ENCODE measurements at regions of chr2 and their contacts with region 1.

Region 1: DNA sequence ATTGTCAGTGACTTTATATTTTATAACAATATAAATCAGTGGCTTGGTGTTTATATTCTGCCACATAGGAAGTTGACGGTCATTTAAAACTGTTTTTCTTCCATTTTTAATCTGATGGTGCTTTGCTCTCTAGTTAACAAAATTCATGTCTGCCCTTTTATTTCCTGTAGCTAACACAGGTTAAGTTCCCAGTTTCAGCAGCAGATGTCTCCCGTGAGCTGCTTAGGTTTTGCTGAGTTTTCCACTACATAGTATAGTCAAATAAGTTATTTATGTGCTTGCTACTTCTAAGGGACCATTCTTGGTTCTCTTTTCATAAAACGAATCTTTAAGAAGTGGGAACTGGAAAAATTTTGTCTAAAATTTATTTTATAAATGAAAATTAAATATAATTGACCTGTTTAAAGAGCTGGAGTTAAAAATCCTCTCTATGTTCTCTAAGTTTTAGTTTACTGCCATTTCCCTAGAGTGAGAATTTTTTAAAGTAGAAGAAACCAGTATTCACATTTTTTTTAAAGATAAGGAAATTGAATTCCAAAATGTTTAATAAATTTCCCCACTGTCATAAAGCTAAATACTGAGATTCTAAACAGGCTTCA is 20.6 kb downstream of the HTR2B start:
- DNase-seq: peak; percentile 21 to 69
- ATAC-seq: peak in 7 of 8 donors; percentile 69 to 87 (median 77)
- H3K4me3 ChIP-seq: no peak overlapping the region
- H3K27ac ChIP-seq: peak overlapping the region in 1 of 10 donors; percentile 34
- H3K4me1 ChIP-seq: peaks cover 0 to 32% (median 3%) of the 10 kb centered on the region in 9 donors
- H3K27me3 ChIP-seq: no peaks in the 10 kb centered on the region
- CTCF ChIP-seq: peak; percentile 55 to 94 (median 83)

Region 2: DNA sequence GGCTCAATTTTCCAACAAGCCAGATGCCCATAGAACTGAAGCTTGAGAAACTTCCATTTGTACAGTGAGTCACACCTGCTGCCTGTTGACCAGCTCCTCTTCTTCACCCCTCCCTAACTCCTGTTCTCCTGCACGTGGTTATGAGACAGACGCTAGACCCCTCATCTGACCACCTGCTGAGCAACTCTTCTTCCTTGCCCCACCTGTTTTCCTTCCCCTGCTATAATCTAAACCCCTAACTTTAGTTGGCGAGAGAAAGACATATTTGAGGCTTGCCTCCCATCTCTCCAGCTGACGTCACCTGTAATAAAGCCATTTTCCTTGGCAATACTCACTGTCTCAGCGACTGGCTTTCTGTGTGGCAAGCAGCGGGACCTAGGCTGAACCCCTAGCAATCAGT is 261.7 kb before region 1 on chr2:
- intact Hi-C with region 1: no loop called
- DNase-seq: no peak
- ATAC-seq: no peak
- H3K4me3 ChIP-seq: no peak overlapping the region
- H3K27ac ChIP-seq: no peak overlapping the region
- H3K4me1 ChIP-seq: peaks cover 0 to under 1% (median 0%) of the 10 kb centered on the region in 9 donors
- H3K27me3 ChIP-seq: peaks cover 0 to 23% (median 12%) of the 10 kb centered on the region in 7 donors
- CTCF ChIP-seq: no peak

Region 3: DNA sequence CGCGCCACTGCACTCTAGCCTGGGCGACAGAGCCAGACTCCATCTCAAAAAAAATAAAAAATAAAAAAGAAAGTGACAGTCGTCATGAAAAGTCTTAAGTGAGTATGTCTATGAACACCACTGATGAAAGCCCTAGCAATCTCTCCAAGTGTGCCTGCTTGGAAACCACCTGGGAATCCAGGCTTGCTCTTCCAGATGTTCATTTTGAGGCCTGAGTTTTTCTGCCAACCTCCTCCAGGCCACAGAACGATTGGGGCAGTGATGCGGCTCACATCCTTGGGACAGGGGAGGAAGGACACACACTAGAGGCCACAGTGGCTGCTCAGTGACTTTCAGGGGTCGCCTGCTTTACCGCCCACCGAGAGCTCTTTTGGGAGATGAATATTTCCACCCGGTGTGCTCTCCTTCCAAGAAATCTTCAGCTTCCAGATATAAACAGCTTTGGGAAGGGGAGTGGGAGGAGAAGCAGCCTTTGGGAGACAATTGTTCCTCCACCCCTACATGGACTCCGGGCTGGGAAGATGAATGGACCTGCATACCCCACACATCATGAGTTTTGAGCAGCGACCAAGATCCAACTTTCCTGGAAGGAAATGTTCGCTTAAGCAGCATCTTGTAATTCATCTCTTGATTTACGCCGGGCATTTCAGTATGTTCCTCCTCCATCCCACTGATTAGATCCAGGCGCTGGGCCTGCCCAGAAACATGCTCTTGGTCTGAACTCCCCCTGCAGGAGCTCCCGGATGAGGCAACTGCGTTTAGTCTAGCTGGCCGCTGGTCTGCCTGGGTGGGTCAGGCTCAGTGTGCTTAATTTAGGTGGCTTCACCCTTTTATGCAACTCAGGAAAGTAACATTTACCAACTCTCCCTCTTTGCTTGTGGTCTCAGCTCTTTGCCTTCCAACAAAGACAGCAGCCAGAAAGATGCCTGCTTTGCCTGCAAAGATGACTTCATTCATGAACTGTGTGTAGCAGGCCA is 88.0 kb after region 1 on chr2:
- intact Hi-C with region 1: loop called in 5 of 10 experiments (anchors 2 to 10 kb)
- DNase-seq: peak; percentile 73 to 84
- ATAC-seq: peak in 7 of 8 donors; percentile 54 to 74 (median 65)
- H3K4me3 ChIP-seq: no peak overlapping the region
- H3K27ac ChIP-seq: peak overlapping the region in 8 of 10 donors; percentile 38 to 97 (median 86)
- H3K4me1 ChIP-seq: peaks cover 14 to 47% (median 22%) of the 10 kb centered on the region in 9 donors
- H3K27me3 ChIP-seq: peaks cover 0 to 16% (median 0%) of the 10 kb centered on the region in 7 donors
- CTCF ChIP-seq: peak; percentile 53 to 79 (median 66)

Region 4: GRCh38 chr2:231198291-231199173 is 94.3 kb after region 1 on chr2 and contains the start of gene ARMC9:
- intact Hi-C with region 1: loop called in 7 of 10 experiments (anchors 2 to 10 kb)
- DNase-seq: peak; percentile 67 to 77
- ATAC-seq: peak; percentile 96 to 99 (median 96)
- H3K4me3 ChIP-seq: peak within 1 kb of the TSS; percentile 62 to 98 (median 84)
- H3K27ac ChIP-seq: peak within 1 kb of the TSS in 7 of 10 donors; percentile 41 to 81 (median 67)
- H3K4me1 ChIP-seq: peaks cover 0 to 18% (median 15%) of the 10 kb centered on the region in 9 donors
- H3K27me3 ChIP-seq: peaks cover 0 to 4% (median 0%) of the 10 kb centered on the region in 7 donors
- CTCF ChIP-seq: no peak
- total RNA-seq, gene ARMC9: 1.6 to 6.8 (median 2.4) TPM

Region 5: DNA sequence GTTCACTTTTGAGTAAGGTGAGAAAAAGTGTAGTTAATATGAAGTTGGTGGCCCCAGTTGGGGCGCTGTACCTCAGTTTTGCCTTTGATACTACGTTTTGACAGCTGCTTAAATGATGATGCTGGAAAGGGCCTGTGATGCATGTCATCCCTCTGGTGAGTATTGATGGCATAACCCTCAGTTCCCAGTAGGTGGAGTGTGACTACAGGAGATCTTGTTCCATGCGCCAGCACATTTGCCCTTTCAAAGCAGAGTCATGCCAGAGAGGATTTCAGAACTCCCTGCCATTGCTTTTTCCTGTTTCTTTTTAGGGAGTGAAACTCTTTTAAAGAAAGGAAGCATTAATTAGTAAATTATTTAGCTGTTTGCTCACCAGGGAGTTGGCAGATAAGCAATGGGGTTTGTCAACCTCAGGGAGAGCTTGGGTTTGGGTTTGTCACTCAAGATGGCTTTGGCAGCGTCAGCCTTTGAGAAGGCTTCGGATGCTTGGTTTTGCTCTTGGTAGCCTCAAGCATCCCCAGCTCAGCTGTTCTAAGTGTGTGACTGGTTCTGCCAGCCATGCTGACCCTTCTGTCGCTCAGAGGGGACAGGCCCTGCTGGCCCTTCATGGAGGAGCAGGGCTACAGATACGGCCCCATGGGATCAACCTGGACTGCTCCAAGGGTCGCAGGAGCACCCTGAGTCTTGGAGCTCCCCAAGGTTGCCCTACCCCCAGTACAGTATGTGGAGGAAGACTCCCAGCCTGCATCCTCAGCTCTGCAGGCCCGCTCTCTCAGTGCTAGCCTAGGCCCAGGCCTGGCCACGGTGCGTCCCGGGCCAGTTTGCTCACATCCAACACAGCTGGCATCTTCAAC is 123.3 kb after region 1 on chr2:
- intact Hi-C with region 1: loop called in 1 of 10 experiments (anchors 10 kb)
- DNase-seq: peak in 1 of 2 donors; percentile 68
- ATAC-seq: peak; percentile 89 to 96 (median 94)
- H3K4me3 ChIP-seq: no peak overlapping the region
- H3K27ac ChIP-seq: peak overlapping the region in 2 of 10 donors; percentile 10 to 42
- H3K4me1 ChIP-seq: peaks cover 0 to 7% (median 0%) of the 10 kb centered on the region in 9 donors
- H3K27me3 ChIP-seq: no peaks in the 10 kb centered on the region
- CTCF ChIP-seq: peak; percentile 55 to 85 (median 80)

Region 6: DNA sequence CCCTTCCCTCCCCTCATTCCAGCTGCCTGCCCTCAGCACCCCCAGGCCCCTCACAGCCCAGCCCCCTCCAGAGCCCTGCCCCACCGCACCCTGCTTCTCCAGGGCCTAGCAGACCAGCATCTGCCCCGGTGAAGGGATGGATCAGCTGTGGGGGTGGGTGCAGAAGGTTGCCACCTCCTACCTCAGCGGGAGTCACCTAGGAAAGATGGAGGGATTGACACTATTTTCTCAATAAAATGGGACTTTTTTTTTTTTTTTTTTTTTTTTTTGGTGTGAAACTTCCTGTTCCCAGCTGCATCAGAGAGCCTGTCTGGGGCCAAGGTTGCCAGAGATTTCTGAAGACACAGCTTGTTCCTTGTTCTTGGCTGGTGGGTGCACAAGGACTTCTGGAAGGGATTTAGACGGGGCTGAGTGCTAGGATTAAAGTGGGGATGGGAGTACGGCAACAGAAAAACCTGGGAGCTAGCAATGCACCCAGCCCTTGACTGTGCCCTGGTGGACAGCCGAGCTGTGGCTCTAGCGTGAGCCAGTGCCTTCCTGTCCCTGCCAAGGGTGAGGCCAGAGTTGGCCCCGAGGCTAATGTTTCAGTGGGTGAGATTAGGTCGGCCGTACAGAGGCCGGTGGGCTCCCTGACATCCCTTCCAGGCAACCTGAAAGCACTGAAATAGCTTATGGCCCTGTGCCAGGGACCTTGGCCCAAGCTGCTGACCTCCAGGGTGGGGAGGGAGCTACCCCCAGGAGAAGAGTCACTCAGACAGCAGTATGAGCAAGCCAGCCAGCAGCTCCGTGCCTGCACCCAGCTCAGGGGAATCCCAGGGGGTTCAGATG is 295.9 kb after region 1 on chr2:
- intact Hi-C with region 1: loop called in 1 of 10 experiments (anchors 5 kb)
- DNase-seq: peak; percentile 53 to 60
- ATAC-seq: peak; percentile 77 to 94 (median 88)
- H3K4me3 ChIP-seq: peak overlapping the region in 1 of 10 donors; percentile 5
- H3K27ac ChIP-seq: peak overlapping the region in 9 of 10 donors; percentile 28 to 76 (median 59)
- H3K4me1 ChIP-seq: peaks cover 0 to 31% (median 22%) of the 10 kb centered on the region in 9 donors
- H3K27me3 ChIP-seq: peaks cover 0 to 16% (median 10%) of the 10 kb centered on the region in 7 donors
- CTCF ChIP-seq: peak in 4 of 9 donors; percentile 34 to 47 (median 41)

Region 7: GRCh38 chr2:231411831-231412617 is 307.8 kb after region 1 on chr2:
- intact Hi-C with region 1: loop called in 8 of 10 experiments (anchors 5 to 10 kb)
- DNase-seq: peak; percentile 76 to 85
- ATAC-seq: peak; percentile 96 to 100 (median 98)
- H3K4me3 ChIP-seq: peak overlapping the region; percentile 46 to 76 (median 61)
- H3K27ac ChIP-seq: peak overlapping the region in 3 of 10 donors; percentile 35 to 53 (median 40)
- H3K4me1 ChIP-seq: peaks cover 0 to 14% (median 12%) of the 10 kb centered on the region in 9 donors
- H3K27me3 ChIP-seq: peaks cover 0 to 43% (median 17%) of the 10 kb centered on the region in 7 donors
- CTCF ChIP-seq: peak; percentile 65 to 94 (median 90)

Region 8: DNA sequence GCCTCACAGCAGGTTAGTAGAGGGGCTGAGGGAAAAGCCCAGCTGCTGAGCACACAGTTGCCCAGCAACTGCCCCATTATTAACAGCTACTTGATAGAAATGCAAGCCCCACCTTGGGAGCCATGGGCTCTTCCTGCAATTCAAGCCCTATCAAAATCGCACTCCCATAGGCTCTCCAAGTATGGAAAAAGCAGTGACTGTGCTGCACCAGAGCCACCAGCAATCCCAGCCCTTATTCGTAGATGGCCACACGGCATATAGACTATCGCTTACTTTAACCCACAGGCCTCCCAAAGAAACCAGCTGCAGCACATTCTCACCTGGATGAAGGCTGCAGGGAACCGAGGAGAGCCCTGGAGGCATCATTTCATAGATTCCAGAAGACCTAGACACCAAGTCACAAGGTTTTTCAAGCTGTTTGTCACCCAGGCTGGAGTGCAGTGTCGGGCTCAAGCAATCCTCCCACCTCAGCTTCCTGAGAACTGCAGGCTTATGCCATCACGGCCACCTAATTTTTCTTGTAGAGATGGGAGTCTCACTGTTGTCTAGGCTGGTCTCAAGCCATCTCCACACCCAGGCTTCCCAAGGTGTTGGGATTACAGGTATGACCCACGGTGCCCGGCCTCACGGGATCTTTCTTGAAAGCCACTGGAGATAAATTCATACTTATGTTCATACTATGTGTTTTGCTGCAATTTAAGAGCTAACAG is 348.7 kb after region 1 on chr2:
- intact Hi-C with region 1: loop called in 8 of 10 experiments (anchors 2 to 10 kb)
- DNase-seq: no peak
- ATAC-seq: peak in 3 of 8 donors; percentile 9 to 14 (median 11)
- H3K4me3 ChIP-seq: no peak overlapping the region
- H3K27ac ChIP-seq: no peak overlapping the region
- H3K4me1 ChIP-seq: peaks cover 0 to 3% (median 0%) of the 10 kb centered on the region in 9 donors
- H3K27me3 ChIP-seq: no peaks in the 10 kb centered on the region
- CTCF ChIP-seq: no peak